ENCODE measurements at regions of chr9 and their contacts with region 1.

Region 1: GRCh38 chr9:90102292-90102901 is 497.6 kb downstream of the GADD45G start:
- DNase-seq: peak; percentile 79 to 88 (median 87)
- H3K4me3 ChIP-seq: no peak overlapping the region
- H3K27ac ChIP-seq: no peak overlapping the region
- H3K4me1 ChIP-seq: peaks cover 3% of the 10 kb centered on the region
- H3K27me3 ChIP-seq: no peaks in the 10 kb centered on the region
- CTCF ChIP-seq: peak; percentile 63 to 92 (median 85)
- EP300 ChIP-seq: no peak
- POLR2A ChIP-seq: no peak

Region 2: GRCh38 chr9:89318123-89319014 is 784.0 kb before region 1 on chr9 and contains the start of gene SECISBP2:
- intact Hi-C with region 1: loop called in 1 of 4 experiments (anchors 10 kb)
- DNase-seq: peak; percentile 95 to 98 (median 97)
- H3K4me3 ChIP-seq: peak within 1 kb of the TSS; percentile 91
- H3K27ac ChIP-seq: peak within 1 kb of the TSS; percentile 99 to 100
- H3K4me1 ChIP-seq: peaks cover 7% of the 10 kb centered on the region
- H3K27me3 ChIP-seq: no peaks in the 10 kb centered on the region
- CTCF ChIP-seq: peak; percentile 49 to 71 (median 62)
- EP300 ChIP-seq: peak; percentile 28
- POLR2A ChIP-seq: peak; percentile 99
- total RNA-seq, gene SECISBP2: 42.8 to 87.6 (median 57.7) TPM

Region 3: DNA sequence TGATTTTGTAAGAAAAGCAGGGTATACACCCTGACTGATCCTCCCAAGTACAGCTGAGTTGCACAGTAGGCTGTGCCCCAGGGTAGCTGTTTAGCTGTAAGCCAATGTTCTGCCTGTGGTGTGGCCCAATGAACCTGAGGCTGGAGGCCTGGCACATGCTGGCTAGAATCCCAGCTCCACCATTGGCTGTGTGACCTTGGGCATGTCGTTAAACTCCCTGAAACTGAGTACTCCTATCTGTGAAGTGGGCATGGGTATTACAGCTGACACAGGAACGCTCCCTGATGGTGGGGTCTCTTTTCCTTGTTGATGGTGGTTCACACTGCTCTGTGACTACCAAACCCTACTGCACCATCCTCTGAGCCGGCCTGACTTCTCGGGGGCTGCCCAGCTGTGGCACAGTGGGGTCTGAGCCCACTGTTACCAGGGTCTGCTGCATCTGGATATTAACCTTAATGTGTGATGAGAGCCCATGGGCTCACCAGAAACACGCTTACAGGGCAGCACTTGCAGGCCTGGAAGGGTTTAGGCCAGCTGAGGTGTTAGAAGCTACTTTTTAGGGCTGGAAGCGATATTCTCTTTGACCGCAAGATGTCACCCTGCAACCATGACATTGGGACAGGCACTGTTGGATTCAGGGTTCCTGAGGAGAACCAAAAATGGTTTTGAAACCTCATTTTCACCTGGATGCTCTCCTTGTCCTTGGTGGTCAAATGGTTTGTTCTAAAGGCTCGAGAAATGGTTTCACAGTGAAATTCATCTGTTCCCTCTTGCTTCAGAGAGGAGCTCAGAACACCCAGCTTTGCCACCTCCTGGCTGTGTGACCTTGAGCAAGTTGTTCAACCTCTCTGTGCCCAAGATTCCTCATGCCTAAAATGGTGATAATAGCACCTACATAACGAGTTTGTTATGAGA is 504.4 kb before region 1 on chr9:
- intact Hi-C with region 1: loop called in 3 of 4 experiments (anchors 2 kb)
- DNase-seq: peak; percentile 36 to 67 (median 59)
- H3K4me3 ChIP-seq: no peak overlapping the region
- H3K27ac ChIP-seq: no peak overlapping the region
- H3K4me1 ChIP-seq: no peaks in the 10 kb centered on the region
- H3K27me3 ChIP-seq: no peaks in the 10 kb centered on the region
- CTCF ChIP-seq: peak; percentile 46 to 79 (median 76)
- EP300 ChIP-seq: no peak
- POLR2A ChIP-seq: no peak

Region 4: DNA sequence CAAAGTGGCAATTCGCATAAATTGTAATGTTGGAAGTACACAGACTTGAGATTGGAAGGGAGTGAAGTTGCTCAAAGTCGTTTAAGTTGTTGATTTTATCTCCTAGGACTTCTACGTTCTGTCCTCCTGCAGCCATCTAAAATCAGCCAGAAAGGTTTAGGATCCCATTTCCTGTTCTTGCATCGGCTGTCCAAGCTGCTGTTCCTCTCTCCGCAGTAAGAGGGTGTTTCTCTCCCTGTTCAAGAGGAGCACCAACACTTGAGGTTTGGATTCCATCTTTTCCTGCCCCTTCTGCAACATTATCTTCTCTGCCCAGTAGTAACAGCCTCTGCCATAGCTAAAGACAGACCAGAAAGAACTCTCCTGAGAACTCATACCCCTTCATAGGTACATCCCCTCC is 124.2 kb before region 1 on chr9:
- intact Hi-C with region 1: loop called in 1 of 4 experiments (anchors 10 kb)
- DNase-seq: no peak
- H3K4me3 ChIP-seq: no peak overlapping the region
- H3K27ac ChIP-seq: no peak overlapping the region
- H3K4me1 ChIP-seq: no peaks in the 10 kb centered on the region
- H3K27me3 ChIP-seq: no peaks in the 10 kb centered on the region
- CTCF ChIP-seq: peak in 1 of 3 donors; percentile 12
- EP300 ChIP-seq: no peak
- POLR2A ChIP-seq: no peak

Region 5: GRCh38 chr9:90165281-90165680 is 62.9 kb after region 1 on chr9:
- intact Hi-C with region 1: no loop called
- DNase-seq: no peak
- H3K4me3 ChIP-seq: no peak overlapping the region
- H3K27ac ChIP-seq: no peak overlapping the region
- H3K4me1 ChIP-seq: no peaks in the 10 kb centered on the region
- H3K27me3 ChIP-seq: no peaks in the 10 kb centered on the region
- CTCF ChIP-seq: no peak
- EP300 ChIP-seq: no peak
- POLR2A ChIP-seq: no peak